Heart right ventricle (tissue), 16 donors: ENCODE measurements at regions of chr16 and their contacts with region 1.

Region 1: GRCh38 chr16:52068447-52069074 is 478.4 kb downstream of the TOX3 start:
- DNase-seq: no peak
- ATAC-seq: peak in 3 of 8 donors; percentile 38 to 75 (median 70)
- H3K4me3 ChIP-seq: peak overlapping the region in 1 of 10 donors; percentile 19
- H3K27ac ChIP-seq: no peak overlapping the region
- H3K4me1 ChIP-seq: peaks cover 0 to 4% (median 0%) of the 10 kb centered on the region in 9 donors
- H3K27me3 ChIP-seq: peaks cover 0 to 6% (median 0%) of the 10 kb centered on the region in 7 donors
- CTCF ChIP-seq: peak in 7 of 9 donors; percentile 17 to 51 (median 41)

Region 2: DNA sequence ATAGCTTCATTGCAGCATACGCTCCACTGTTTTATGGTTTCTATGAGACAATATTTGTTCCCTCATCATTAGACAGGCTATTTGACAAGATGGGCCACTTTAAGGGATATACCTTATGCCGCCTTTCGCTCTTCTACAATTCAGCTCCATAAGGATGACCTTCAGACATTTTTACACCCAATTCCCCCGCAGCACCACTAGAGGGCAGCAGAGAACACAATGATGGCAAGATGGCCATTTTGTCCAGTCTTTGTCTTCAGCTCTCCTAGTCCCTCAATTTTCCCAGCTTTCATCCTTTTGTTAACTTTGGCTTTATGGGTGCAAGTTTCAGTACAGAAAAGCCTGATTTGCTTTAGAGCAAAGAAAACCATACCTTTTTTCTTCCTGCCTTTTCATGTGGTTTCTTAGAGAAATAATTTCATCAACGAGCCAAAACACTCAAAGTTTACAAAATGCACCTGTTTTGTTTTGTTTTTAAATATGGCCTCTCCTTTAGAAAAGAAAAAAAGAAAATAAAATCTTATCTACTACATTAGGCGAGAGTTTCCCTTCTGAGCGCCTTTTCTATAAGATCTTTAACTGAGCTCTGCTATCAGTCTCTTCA is 123.1 kb after region 1 on chr16:
- intact Hi-C with region 1: loop called in 1 of 10 experiments (anchors 5 kb)
- DNase-seq: peak; percentile 29 to 51
- ATAC-seq: peak in 2 of 8 donors; percentile 42 to 52
- H3K4me3 ChIP-seq: no peak overlapping the region
- H3K27ac ChIP-seq: no peak overlapping the region
- H3K4me1 ChIP-seq: no peaks in the 10 kb centered on the region
- H3K27me3 ChIP-seq: peaks cover 0 to 8% (median 0%) of the 10 kb centered on the region in 7 donors
- CTCF ChIP-seq: peak; percentile 77 to 92 (median 88)

Region 3: GRCh38 chr16:52906281-52906680 is 837.7 kb after region 1 on chr16:
- intact Hi-C with region 1: loop called in 7 of 10 experiments (anchors 5 kb)
- DNase-seq: no peak
- ATAC-seq: peak in 1 of 8 donors; percentile 20
- H3K4me3 ChIP-seq: no peak overlapping the region
- H3K27ac ChIP-seq: no peak overlapping the region
- H3K4me1 ChIP-seq: peaks cover 0 to 4% (median 0%) of the 10 kb centered on the region in 9 donors
- H3K27me3 ChIP-seq: no peaks in the 10 kb centered on the region
- CTCF ChIP-seq: no peak

Region 4: DNA sequence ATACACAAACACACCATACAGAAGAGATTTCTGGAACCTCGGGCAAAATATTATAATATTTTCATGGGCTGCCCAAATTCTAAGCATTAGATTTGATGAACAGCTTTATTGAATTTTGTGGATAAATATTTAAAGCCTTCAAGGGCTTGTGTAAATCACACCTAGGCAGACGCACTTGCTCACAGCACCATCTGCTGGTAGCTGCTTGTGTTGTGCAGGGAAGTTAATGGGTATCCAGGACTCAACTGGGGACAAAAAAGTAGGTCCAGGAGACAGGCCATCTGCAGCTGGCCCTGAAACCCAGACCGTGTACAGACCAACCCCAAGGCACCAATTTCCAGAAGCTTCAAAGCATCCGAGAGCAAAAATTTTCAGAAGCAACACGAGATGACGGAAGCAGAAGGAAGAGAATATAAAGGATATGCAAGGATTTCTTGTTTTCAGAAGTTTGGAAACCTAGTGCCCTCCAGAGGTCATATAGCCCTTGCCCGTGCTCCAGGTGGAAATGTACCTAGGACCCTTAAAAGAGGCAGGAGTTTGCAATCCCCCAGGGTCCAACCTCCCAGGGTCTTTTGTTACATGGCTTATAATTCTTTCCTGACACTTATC is 844.1 kb after region 1 on chr16:
- intact Hi-C with region 1: loop called in 7 of 10 experiments (anchors 5 kb)
- DNase-seq: peak; percentile 33 to 38
- ATAC-seq: peak in 4 of 8 donors; percentile 37 to 61 (median 53)
- H3K4me3 ChIP-seq: no peak overlapping the region
- H3K27ac ChIP-seq: no peak overlapping the region
- H3K4me1 ChIP-seq: no peaks in the 10 kb centered on the region
- H3K27me3 ChIP-seq: peaks cover 0 to 5% (median 0%) of the 10 kb centered on the region in 7 donors
- CTCF ChIP-seq: peak; percentile 52 to 77 (median 73)

Region 5: DNA sequence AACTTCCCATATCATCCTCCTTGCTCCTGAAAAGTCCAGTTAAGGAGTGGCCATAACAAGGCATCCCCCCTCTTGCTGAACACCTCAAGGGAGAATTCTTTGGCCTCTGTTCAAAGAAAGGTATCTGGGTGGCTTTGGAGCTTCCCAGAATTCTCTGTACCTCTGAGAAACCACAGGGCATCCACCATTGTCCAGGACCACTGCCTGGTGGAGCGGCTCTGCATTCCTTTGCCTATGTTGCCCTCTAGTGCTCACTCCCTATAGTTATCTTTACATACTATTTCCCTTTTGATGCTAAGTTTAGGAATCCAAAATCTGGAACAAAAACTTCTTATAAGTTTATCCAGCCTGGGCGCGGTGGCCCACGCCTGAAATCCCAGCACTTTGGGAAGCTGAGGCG is 953.8 kb after region 1 on chr16:
- intact Hi-C with region 1: loop called in 6 of 10 experiments (anchors 5 kb)
- DNase-seq: peak in 1 of 2 donors; percentile 40
- ATAC-seq: peak in 6 of 8 donors; percentile 55 to 77 (median 60)
- H3K4me3 ChIP-seq: no peak overlapping the region
- H3K27ac ChIP-seq: no peak overlapping the region
- H3K4me1 ChIP-seq: no peaks in the 10 kb centered on the region
- H3K27me3 ChIP-seq: no peaks in the 10 kb centered on the region
- CTCF ChIP-seq: peak; percentile 26 to 69 (median 58)